Activated T-helper 1 cell treated with anti-CD3 and anti-CD28 coated beads, Interleukin-12 subunit alpha, Interleukin-12 subunit beta, Interleukin-2, Interleukin-4 antibody, amounts not matched to agents 30 ng/mL and 10 ng/mL and 1 ng/mL, durations not matched to agents 14 hours and 24 hours and 36 hours (primary cell): ENCODE measurements at regions of chr5 and their contacts with region 1.

Region 1: DNA sequence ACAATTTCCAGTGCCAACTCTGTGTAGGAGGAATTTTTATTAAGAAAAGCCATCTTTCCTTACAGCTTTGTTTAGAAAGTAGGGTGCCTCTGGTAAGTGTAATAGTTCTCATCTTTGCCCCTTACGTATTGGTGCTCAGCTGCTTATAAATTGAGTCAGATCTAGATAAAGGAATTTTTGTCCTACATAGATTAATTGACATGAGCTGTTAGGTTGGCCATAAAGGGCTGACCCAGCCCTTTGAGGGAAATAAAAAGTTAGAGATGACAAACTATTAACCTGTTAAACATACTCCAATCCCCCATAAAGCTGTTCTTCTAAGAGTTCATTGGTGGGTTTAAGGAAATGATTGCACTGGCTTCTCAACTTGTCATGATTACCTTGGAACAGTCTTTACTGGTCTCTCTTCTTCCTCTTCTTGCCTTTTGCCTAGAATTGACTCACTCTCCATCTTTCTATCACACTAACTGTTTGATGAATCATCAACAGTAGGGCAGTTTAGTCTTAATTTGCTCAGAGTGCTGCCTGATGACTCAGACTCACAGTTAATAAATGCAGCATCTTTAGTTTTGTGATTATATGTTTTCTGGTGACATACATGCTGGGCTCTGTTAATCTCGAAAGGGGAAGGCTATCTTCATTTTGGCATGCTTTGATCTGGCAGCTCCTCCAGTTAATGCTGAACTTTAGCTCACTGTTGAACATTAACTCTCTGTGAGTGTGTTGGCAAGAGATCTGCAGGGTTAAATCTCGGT is 51.7 kb downstream of the ARHGAP26 start:
- DNase-seq: no peak
- H3K4me3 Mint-ChIP-seq: no peak overlapping the region
- H3K27ac Mint-ChIP-seq: peak overlapping the region; percentile 16
- H3K4me1 Mint-ChIP-seq: peaks cover 79% of the 10 kb centered on the region
- H3K27me3 Mint-ChIP-seq: no peaks in the 10 kb centered on the region

Region 2: GRCh38 chr5:142758056-142758795 is 63.7 kb before region 1 on chr5:
- intact Hi-C with region 1: loop called (anchors 1 kb)
- DNase-seq: no peak
- H3K4me3 Mint-ChIP-seq: no peak overlapping the region
- H3K27ac Mint-ChIP-seq: peak overlapping the region; percentile 10
- H3K4me1 Mint-ChIP-seq: peaks cover 18% of the 10 kb centered on the region
- H3K27me3 Mint-ChIP-seq: peaks cover 6% of the 10 kb centered on the region

Region 3: DNA sequence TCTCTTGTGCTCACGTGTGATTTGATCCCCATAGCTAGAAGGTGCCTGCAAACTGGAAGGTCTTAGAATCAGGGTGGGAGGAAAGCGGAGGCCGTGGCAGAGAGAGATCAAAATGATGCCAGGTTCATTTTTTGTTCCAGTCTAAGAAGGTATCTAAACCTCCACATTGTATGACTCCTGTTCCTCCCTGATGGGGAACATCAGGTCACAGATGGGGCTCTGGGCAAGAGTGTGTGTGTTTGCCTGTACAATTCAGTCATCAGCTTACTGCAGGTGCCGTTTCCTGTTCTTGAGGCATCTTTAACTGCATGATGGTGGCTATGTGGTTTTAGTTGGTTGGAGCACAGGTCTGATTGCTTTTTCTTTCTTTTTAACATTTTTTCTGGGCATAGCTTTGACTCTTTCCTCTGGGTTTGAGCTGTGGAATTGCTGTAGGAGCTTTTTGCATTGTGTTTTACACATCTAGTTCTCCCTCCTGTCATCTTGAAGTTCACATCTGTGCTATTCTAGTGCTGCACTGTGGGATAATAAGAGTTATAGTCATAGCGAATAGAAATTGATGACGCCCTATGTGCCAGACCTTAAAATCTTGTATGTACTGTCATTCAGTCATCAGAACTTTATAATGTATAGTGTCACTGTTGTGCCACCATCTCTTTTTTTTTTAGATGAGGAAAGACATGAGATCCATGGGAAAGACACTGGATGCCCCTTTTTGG is 21.0 kb before region 1 on chr5:
- intact Hi-C with region 1: loop called (anchors 1 kb)
- DNase-seq: peak; percentile 53
- H3K4me3 Mint-ChIP-seq: peak overlapping the region; percentile 73
- H3K27ac Mint-ChIP-seq: peak overlapping the region; percentile 93
- H3K4me1 Mint-ChIP-seq: peaks cover 67% of the 10 kb centered on the region
- H3K27me3 Mint-ChIP-seq: no peaks in the 10 kb centered on the region

Region 4: GRCh38 chr5:142837406-142837746 is 15.5 kb after region 1 on chr5:
- intact Hi-C with region 1: no loop called
- DNase-seq: no peak
- H3K4me3 Mint-ChIP-seq: no peak overlapping the region
- H3K27ac Mint-ChIP-seq: no peak overlapping the region
- H3K4me1 Mint-ChIP-seq: peaks cover 14% of the 10 kb centered on the region
- H3K27me3 Mint-ChIP-seq: peaks cover 4% of the 10 kb centered on the region

Region 5: DNA sequence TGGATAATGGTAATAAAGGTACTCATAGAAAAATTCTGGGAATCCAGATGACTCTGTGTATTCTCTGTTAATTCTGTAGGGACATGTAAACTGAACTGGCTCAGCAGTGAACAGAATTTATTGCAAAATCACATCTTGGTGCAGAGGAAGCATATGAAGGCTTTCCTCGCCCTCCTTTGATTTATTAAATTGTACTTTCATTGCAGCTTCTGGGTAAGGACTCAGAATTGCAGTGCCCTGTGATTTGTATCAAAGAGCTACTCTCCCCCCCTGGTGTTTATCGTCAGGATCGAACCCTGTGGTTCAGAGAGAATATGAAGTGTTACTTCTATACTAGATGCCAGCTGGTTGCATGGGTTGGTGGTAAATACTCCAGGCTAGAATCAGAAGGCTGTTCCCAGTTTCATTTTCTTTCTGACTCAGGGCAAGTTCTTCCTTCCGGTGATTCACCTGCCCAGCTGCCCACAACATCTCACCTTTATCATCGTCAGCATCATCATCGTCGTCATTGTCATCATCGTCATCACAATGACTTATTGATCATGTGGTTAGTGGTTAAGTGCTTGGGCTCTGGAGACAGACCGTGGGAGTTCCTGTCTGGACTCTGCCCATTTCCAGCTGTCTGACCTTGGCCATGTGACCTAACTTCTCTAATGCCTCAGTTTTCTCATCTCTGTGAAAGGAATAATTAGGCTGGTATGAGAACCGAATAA is 187.1 kb after region 1 on chr5:
- intact Hi-C with region 1: loop called (anchors 5 kb)
- DNase-seq: peak; percentile 82
- H3K4me3 Mint-ChIP-seq: peak overlapping the region; percentile 24
- H3K27ac Mint-ChIP-seq: peak overlapping the region; percentile 86
- H3K4me1 Mint-ChIP-seq: peaks cover 79% of the 10 kb centered on the region
- H3K27me3 Mint-ChIP-seq: no peaks in the 10 kb centered on the region